ENCODE measurements at regions of chr15 and their contacts with region 1.

Region 1: GRCh38 chr15:75195122-75195765 is 6.4 kb upstream of the C15orf39 start:
- DNase-seq: no peak
- ATAC-seq: no peak
- H3K4me3 ChIP-seq: no peak overlapping the region
- H3K4me3 Mint-ChIP-seq: no peak overlapping the region
- H3K27ac ChIP-seq: no peak overlapping the region
- H3K27ac Mint-ChIP-seq: no peak overlapping the region
- H3K4me1 ChIP-seq: peaks cover 5 to 9% of the 10 kb centered on the region in 2 donors
- H3K4me1 Mint-ChIP-seq: peaks cover 6% of the 10 kb centered on the region
- H3K27me3 ChIP-seq: peaks cover 0 to 59% (median 10%) of the 10 kb centered on the region in 4 experiments
- H3K27me3 Mint-ChIP-seq: peaks cover 14% of the 10 kb centered on the region
- CTCF ChIP-seq: no peak

Region 2: GRCh38 chr15:75138016-75138999 is 56.9 kb before region 1 on chr15:
- CTCF ChIA-PET with region 1: no interaction called
- POLR2A ChIA-PET with region 1: interaction called, 12 read pairs
- intact Hi-C with region 1: no loop called
- DNase-seq: no peak
- ATAC-seq: no peak
- H3K4me3 ChIP-seq: no peak overlapping the region
- H3K4me3 Mint-ChIP-seq: no peak overlapping the region
- H3K27ac ChIP-seq: no peak overlapping the region
- H3K27ac Mint-ChIP-seq: no peak overlapping the region
- H3K4me1 ChIP-seq: peaks cover 0 to 7% of the 10 kb centered on the region in 2 donors
- H3K4me1 Mint-ChIP-seq: peaks cover 8% of the 10 kb centered on the region
- H3K27me3 ChIP-seq: peaks cover 0 to 3% (median 0%) of the 10 kb centered on the region in 4 experiments
- H3K27me3 Mint-ChIP-seq: peaks cover 4% of the 10 kb centered on the region
- CTCF ChIP-seq: no peak